HepG2 (cell line): ENCODE measurements at regions of chr22 and their contacts with region 1.

Region 1: GRCh38 chr22:29154364-29155048 is 51.2 kb upstream of the EMID1 start:
- DNase-seq: peak; percentile 49
- ATAC-seq: peak; percentile 87
- H3K4me3 ChIP-seq: peak overlapping the region; percentile 23 to 53 (median 36); a peak in 4 of 6 replicates
- H3K27ac ChIP-seq: no peak overlapping the region
- H3K4me1 ChIP-seq: peaks cover 29% of the 10 kb centered on the region
- H3K27me3 ChIP-seq: no peaks in the 10 kb centered on the region
- CTCF ChIP-seq: peak; percentile 98
- EP300 ChIP-seq: no peak
- POLR2A ChIP-seq: no peak
- RAD21 ChIP-seq: peak; percentile 96

Region 2: GRCh38 chr22:28855355-28856094 is 299.0 kb before region 1 on chr22:
- CTCF ChIA-PET with region 1: interaction called, 7 read pairs
- POLR2A ChIA-PET with region 1: no interaction called
- in situ Hi-C with region 1: no loop called
- intact Hi-C with region 1: loop called (anchors 10 kb)
- DNase-seq: peak; percentile 70
- ATAC-seq: peak; percentile 79
- H3K4me3 ChIP-seq: no peak overlapping the region
- H3K27ac ChIP-seq: no peak overlapping the region
- H3K4me1 ChIP-seq: peaks cover 26% of the 10 kb centered on the region
- H3K27me3 ChIP-seq: no peaks in the 10 kb centered on the region
- CTCF ChIP-seq: peak; percentile 90
- EP300 ChIP-seq: no peak
- POLR2A ChIP-seq: no peak
- RAD21 ChIP-seq: peak; percentile 86

Region 3: GRCh38 chr22:29040385-29041275 is 113.9 kb before region 1 on chr22:
- CTCF ChIA-PET with region 1: no interaction called
- POLR2A ChIA-PET with region 1: no interaction called
- in situ Hi-C with region 1: no loop called
- intact Hi-C with region 1: loop called (anchors 5 kb)
- DNase-seq: peak; percentile 65
- ATAC-seq: peak; percentile 65
- H3K4me3 ChIP-seq: no peak overlapping the region
- H3K27ac ChIP-seq: no peak overlapping the region
- H3K4me1 ChIP-seq: peaks cover 87% of the 10 kb centered on the region
- H3K27me3 ChIP-seq: no peaks in the 10 kb centered on the region
- CTCF ChIP-seq: peak; percentile 86
- EP300 ChIP-seq: no peak
- POLR2A ChIP-seq: no peak
- RAD21 ChIP-seq: peak; percentile 88

Region 4: DNA sequence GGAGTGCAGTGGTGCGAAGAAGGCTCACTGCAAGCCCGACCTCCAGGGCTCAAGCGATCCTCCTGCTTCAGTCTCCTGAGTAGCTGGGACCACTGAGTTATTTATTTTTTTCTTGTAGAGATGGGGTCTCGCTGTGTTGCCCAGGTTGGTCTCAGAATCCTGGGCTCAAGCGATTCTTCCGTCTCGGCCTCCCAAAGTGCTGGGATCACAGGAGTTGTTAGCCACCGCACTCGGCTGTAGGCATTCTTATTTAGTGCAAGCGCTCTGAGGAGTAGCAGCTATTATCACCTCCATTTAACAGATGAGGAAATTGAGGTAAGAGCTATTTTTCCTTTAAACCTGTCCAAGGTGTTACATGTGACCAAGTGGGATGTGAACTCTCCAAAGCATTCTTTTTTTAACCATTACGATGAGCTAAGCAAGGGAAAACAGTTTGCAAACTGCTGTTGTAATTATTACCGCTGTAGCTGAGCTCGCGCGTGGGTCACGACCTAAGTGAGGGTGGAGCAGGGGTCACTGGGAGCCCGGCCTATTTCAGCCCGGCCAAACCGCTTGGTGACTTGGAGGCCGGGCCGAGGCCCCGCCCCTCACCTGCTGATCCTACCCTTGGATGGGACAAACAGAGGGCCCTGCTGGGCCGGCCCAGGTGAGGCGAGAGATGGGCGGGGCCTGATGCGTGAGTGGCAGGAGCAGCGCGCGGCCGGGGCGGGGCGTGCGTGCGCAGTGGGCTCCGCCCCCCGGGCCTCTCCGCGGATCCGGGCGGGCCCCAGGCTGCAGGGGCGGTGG is 82.1 kb before region 1 on chr22:
- CTCF ChIA-PET with region 1: no interaction called
- POLR2A ChIA-PET with region 1: no interaction called
- in situ Hi-C with region 1: loop called (anchors 5 kb)
- intact Hi-C with region 1: loop called (anchors 5 kb)
- DNase-seq: peak; percentile 89
- ATAC-seq: peak; percentile 75
- H3K4me3 ChIP-seq: peak overlapping the region; percentile 52 to 75 (median 59)
- H3K27ac ChIP-seq: no peak overlapping the region
- H3K4me1 ChIP-seq: peaks cover 53% of the 10 kb centered on the region
- H3K27me3 ChIP-seq: no peaks in the 10 kb centered on the region
- CTCF ChIP-seq: no peak
- EP300 ChIP-seq: no peak
- POLR2A ChIP-seq: no peak
- RAD21 ChIP-seq: no peak

Region 5: GRCh38 chr22:29167032-29167911 is 12.8 kb after region 1 on chr22:
- CTCF ChIA-PET with region 1: no interaction called
- POLR2A ChIA-PET with region 1: no interaction called
- in situ Hi-C with region 1: no loop called
- intact Hi-C with region 1: no loop called
- DNase-seq: no peak
- ATAC-seq: no peak
- H3K4me3 ChIP-seq: no peak overlapping the region
- H3K27ac ChIP-seq: no peak overlapping the region
- H3K4me1 ChIP-seq: no peaks in the 10 kb centered on the region
- H3K27me3 ChIP-seq: peaks cover 4 to 18% of the 10 kb centered on the region in 2 experiments; a peak in 3 of 5 replicates
- CTCF ChIP-seq: no peak
- EP300 ChIP-seq: no peak
- POLR2A ChIP-seq: no peak
- RAD21 ChIP-seq: no peak

Region 6: DNA sequence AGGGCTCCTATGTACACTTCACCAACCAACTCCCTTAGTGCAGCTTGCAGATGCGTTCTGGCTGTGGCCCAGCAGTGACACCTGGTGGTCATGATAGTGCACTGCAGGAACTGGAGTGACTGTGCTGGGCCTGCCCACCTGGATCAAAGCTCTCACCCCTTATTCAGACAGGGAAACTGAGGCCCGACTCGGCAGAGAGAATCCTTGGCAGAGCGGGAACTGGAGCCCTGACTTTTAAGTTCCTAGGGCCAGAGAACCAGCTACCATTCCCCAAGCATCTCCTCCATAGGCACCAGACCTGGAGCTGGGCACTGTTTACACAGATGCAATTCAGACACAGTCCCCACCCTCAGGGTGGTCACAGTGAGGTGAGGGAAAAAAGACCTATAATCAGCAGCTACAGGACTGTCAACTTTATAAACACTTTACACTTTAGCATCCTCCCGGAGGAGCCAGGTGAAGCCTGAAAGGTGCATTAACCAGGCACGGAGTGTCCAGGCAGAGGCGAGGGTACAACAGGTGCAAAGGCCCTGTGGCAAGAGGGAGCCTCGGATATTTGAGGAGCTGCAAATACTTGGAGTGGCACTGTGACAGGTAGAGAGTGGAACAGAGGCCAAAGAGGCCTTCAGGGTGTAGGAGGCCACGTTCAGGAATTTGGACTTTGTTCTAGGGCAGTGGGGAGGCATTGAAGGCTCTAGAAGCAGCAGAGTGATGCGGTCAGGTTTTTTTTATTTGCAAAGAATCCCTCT is 91.3 kb after region 1 on chr22:
- CTCF ChIA-PET with region 1: interaction called, 7 read pairs
- POLR2A ChIA-PET with region 1: no interaction called
- in situ Hi-C with region 1: no loop called
- intact Hi-C with region 1: loop called (anchors 5 kb)
- DNase-seq: peak; percentile 62
- ATAC-seq: peak; percentile 91
- H3K4me3 ChIP-seq: peak overlapping the region in 1 of 3 experiments; percentile 12; a peak in 1 of 6 replicates
- H3K27ac ChIP-seq: no peak overlapping the region
- H3K4me1 ChIP-seq: peaks cover 16% of the 10 kb centered on the region
- H3K27me3 ChIP-seq: 0 out of 5 replicates have a peak, but pooled peaks cover 0 to 8% of the 10 kb centered on the region in 2 experiments
- CTCF ChIP-seq: peak; percentile 98
- EP300 ChIP-seq: 0 out of 4 replicates have a peak, but pooled peaks of 1 of the 2 experiments have one; percentile 9
- POLR2A ChIP-seq: no peak
- RAD21 ChIP-seq: peak; percentile 96